ENCODE measurements at regions of chr6 and their contacts with region 1.

Region 1: DNA sequence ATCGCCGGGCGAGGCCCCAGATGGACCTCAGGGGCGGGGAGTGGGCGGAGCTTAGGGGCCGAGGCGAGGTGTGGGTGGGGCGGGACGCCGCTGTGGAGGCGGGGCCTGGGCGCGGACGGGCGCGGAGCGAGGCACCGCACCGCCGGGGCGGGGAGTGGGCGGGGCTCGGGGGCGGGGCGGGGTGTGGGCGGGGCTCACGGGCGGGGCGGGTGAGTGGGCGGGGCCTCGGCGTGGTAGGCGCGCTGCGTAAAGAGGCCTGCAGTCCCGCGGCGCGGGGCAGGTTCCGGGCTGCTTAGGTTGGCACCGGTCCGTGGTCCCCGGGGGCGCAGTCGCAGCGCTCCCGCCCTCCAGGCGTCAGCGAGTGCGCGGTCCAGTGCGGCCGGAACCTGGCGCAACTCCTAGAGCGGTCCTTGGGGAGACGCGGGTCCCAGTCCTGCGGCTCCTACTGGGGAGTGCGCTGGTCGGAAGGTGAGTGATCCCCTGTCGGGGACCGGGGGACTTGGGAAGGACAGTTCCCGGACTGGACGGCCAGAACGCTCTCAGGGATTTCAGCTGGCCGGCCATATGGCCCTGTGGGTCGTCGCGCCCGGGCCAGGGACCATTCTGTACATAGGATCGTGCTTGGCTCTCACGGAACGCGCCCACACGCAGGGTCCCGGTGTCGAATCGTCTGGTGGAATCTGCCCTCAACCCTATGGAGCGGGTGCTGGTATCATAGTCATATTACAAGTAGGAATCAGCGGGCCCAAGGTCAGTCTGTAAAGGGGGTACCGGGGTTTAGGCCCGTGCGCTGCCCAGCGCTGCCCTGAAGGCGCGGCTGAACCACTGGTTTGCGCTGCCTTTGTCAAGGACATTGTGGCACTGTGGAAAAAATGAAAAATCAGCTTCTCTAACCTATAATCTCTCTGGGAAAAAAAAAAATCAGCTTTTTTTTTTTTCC is at the start of gene NQO2:
- DNase-seq: peak; percentile 73
- ATAC-seq: peak; percentile 97
- H3K4me3 ChIP-seq: peak within 1 kb of the TSS; percentile 78
- H3K27ac ChIP-seq: peak within 1 kb of the TSS; percentile 58
- H3K4me1 ChIP-seq: peaks cover 5% of the 10 kb centered on the region
- H3K27me3 ChIP-seq: no peaks in the 10 kb centered on the region
- CTCF ChIP-seq: 0 out of 2 replicates have a peak, but pooled peaks have one; percentile 0
- POLR2A ChIP-seq: peak; percentile 82
- RAD21 ChIP-seq: no peak
- total RNA-seq, gene NQO2: 59.4 and 72.1 TPM in 2 replicates

Region 2: GRCh38 chr6:3013479-3013878 is 13.6 kb after region 1 on chr6:
- CTCF ChIA-PET with region 1: interaction called, 5 read pairs
- POLR2A ChIA-PET with region 1: no interaction called
- dilution Hi-C with region 1: no loop called
- in situ Hi-C with region 1: no loop called
- intact Hi-C with region 1: loop called (anchors 1 kb)
- DNase-seq: peak; percentile 47
- ATAC-seq: peak; percentile 72
- H3K4me3 ChIP-seq: no peak overlapping the region
- H3K27ac ChIP-seq: no peak overlapping the region
- H3K4me1 ChIP-seq: 0 out of 2 replicates have a peak, but pooled peaks cover 3% of the 10 kb centered on the region
- H3K27me3 ChIP-seq: no peaks in the 10 kb centered on the region
- CTCF ChIP-seq: no peak
- POLR2A ChIP-seq: no peak
- RAD21 ChIP-seq: no peak

Region 3: GRCh38 chr6:3052481-3053230 is 52.8 kb after region 1 on chr6:
- CTCF ChIA-PET with region 1: interaction called, 6 read pairs
- POLR2A ChIA-PET with region 1: interaction called, 6 read pairs
- dilution Hi-C with region 1: no loop called
- in situ Hi-C with region 1: loop called (anchors 10 kb)
- intact Hi-C with region 1: loop called (anchors 1 kb)
- DNase-seq: no peak
- ATAC-seq: no peak
- H3K4me3 ChIP-seq: no peak overlapping the region
- H3K27ac ChIP-seq: no peak overlapping the region
- H3K4me1 ChIP-seq: no peaks in the 10 kb centered on the region
- H3K27me3 ChIP-seq: peaks cover 14% of the 10 kb centered on the region; the same call in 1 of the 2 replicates
- CTCF ChIP-seq: no peak
- POLR2A ChIP-seq: no peak
- RAD21 ChIP-seq: no peak